Lower leg skin (tissue), 4 donors: ENCODE measurements at regions of chr4 and their contacts with region 1.

Region 1: DNA sequence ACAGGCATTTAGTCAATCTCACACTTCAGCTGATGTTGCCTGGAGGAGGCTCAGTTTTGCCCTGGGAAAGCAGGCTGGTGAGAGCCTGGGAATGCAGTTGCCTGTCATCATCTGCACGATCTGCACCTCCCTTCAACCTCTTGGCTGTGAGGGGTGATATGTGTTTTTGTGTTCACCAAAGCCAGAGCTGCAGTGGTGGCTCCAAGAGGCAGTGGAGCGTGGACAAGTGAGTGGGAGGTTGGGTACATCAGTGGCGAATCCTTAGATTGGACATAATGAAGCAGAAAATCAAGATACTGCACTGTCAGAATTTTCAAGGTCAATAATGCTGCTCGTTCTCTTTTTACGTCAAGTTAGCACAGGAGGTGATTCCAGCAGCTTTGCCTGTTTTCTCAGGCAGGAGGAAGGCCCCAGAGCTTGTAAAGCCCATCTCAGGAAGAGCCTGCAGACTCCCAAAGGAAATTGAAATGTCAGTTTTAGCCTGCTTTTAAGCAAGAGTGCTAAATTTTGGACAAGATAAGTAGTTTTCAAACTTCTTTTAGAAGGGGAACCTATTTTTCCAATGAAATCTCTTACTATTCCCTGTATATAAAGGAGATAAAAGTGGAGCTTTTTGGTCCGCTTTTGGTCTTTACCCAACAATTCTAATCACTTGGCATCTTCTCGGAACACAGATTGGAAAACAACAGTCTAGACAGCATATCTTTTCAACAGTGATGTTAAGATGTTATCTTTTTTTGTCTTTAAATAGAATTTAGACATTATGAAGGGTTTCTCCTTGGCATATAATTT is 92.8 kb downstream of the FRAS1 start:
- DNase-seq: no peak
- H3K4me3 ChIP-seq: no peak overlapping the region
- CTCF ChIP-seq: no peak
- POLR2A ChIP-seq: no peak

Region 2: GRCh38 chr4:77893451-77893850 is 256.5 kb before region 1 on chr4:
- intact Hi-C with region 1: no loop called
- DNase-seq: no peak
- H3K4me3 ChIP-seq: no peak overlapping the region
- CTCF ChIP-seq: no peak
- POLR2A ChIP-seq: no peak

Region 3: GRCh38 chr4:79015411-79015810 is 865.5 kb after region 1 on chr4:
- intact Hi-C with region 1: loop called (anchors 5 kb)
- DNase-seq: no peak
- H3K4me3 ChIP-seq: no peak overlapping the region
- CTCF ChIP-seq: no peak
- POLR2A ChIP-seq: no peak